MCF 10A (cell line): ENCODE measurements at regions of chr10 and their contacts with region 1.

Region 1: DNA sequence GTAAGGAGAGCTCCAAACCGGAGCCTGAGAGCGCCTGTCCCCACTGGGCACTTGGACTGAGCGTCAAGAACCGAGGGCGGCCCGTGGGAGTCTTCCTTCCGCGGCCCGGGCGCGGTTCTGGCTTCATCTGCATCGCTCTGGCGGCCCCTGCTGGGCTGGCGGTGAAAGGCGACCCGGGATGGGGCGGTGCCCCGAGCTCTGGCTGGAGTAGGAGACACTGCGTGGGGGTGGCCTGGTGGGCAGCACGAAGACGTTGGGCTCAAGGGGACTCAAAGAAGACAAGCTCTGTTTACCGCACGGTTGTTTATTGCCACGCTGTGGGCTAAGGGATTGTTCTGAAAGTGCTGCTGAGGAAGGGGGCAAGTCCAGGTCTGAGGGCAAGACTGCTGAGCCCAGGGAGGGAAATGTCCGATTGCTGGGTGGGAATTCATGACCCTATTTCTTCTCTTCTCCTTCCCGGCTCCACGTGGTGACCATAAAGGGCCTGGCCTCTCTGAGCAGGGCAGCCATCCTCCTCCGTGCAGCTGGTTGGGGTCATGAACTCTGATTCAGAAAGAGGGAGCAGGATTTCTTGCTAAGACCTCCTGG is 29.8 kb downstream of the PLAU start:
- DNase-seq: peak; percentile 74
- H3K4me3 Mint-ChIP-seq: no peak overlapping the region
- H3K27ac Mint-ChIP-seq: peak overlapping the region; percentile 72
- H3K4me1 Mint-ChIP-seq: peaks cover 31% of the 10 kb centered on the region
- H3K27me3 Mint-ChIP-seq: no peaks in the 10 kb centered on the region
- CTCF ChIP-seq: peak; percentile 95

Region 2: DNA sequence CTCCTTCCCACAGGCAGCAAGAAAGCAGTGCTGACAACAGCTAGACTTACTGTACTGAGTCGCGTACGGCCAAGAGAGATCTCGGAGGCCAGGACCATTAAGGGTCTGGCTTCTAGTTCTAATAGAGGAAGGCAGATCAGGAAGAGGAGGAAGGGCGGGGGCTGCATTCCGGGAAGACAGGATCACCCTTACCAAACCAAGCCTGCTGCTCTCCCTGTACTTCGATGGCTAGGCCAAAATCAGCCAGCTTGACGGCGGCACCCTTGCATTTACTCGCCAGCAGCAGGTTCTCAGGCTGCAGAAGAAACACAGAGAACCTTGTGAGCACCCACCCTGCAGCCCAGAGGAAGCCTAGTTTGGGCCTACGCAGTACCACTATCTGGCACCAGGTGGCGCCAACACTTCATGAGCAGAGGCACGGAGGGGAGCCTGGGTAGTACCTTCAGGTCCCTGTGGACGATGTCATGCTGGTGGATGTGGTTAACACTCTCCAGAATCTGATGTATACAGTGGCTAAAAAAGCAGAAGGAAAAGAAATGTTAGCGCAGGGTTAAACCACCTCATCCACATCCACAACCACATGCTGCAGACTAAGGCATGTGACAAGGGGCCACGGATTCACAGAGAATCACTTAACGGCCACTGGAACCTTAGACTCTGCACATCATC is 91.8 kb before region 1 on chr10:
- CTCF ChIA-PET with region 1: interaction called, 63 read pairs
- POLR2A ChIA-PET with region 1: interaction called, 11 read pairs
- intact Hi-C with region 1: loop called (anchors 1 kb)
- DNase-seq: peak; percentile 79
- H3K4me3 Mint-ChIP-seq: no peak overlapping the region
- H3K27ac Mint-ChIP-seq: no peak overlapping the region
- H3K4me1 Mint-ChIP-seq: no peaks in the 10 kb centered on the region
- H3K27me3 Mint-ChIP-seq: no peaks in the 10 kb centered on the region
- CTCF ChIP-seq: peak; percentile 98

Region 3: GRCh38 chr10:73920089-73920488 is 20.6 kb before region 1 on chr10:
- CTCF ChIA-PET with region 1: interaction called, 30 read pairs
- POLR2A ChIA-PET with region 1: interaction called, 16 read pairs
- intact Hi-C with region 1: no loop called
- DNase-seq: peak; percentile 91
- H3K4me3 Mint-ChIP-seq: no peak overlapping the region
- H3K27ac Mint-ChIP-seq: peak overlapping the region; percentile 95
- H3K4me1 Mint-ChIP-seq: peaks cover 29% of the 10 kb centered on the region
- H3K27me3 Mint-ChIP-seq: no peaks in the 10 kb centered on the region
- CTCF ChIP-seq: no peak

Region 4: GRCh38 chr10:73956476-73957359 is 16.0 kb after region 1 on chr10:
- CTCF ChIA-PET with region 1: interaction called, 29 read pairs
- POLR2A ChIA-PET with region 1: interaction called, 3 read pairs
- intact Hi-C with region 1: no loop called
- DNase-seq: no peak
- H3K4me3 Mint-ChIP-seq: no peak overlapping the region
- H3K27ac Mint-ChIP-seq: no peak overlapping the region
- H3K4me1 Mint-ChIP-seq: peaks cover 4% of the 10 kb centered on the region
- H3K27me3 Mint-ChIP-seq: no peaks in the 10 kb centered on the region
- CTCF ChIP-seq: no peak

Region 5: DNA sequence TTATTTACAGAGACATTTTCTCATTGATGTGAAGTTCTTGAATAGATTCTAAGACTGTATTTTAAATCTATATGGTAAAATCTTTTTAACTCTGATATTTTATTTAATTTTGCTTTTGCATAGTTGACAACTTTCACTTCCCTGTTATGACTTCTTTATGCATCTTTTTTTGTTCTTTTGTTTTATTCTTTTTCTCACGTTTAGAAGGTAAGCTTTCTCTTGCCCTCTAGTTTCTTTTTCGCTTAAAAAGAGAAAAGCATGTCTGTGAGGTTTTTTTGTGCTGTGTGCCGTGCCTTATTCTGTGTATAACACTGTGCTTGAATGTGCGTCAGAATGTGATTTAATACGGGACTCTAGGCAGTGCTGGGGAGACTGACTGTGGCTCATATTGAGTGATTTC is 135.2 kb after region 1 on chr10:
- CTCF ChIA-PET with region 1: interaction called, 16 read pairs
- POLR2A ChIA-PET with region 1: interaction called, 12 read pairs
- intact Hi-C with region 1: loop called (anchors 2 kb)
- DNase-seq: no peak
- H3K4me3 Mint-ChIP-seq: no peak overlapping the region
- H3K27ac Mint-ChIP-seq: no peak overlapping the region
- H3K4me1 Mint-ChIP-seq: peaks cover 16% of the 10 kb centered on the region
- H3K27me3 Mint-ChIP-seq: no peaks in the 10 kb centered on the region
- CTCF ChIP-seq: no peak

Region 6: DNA sequence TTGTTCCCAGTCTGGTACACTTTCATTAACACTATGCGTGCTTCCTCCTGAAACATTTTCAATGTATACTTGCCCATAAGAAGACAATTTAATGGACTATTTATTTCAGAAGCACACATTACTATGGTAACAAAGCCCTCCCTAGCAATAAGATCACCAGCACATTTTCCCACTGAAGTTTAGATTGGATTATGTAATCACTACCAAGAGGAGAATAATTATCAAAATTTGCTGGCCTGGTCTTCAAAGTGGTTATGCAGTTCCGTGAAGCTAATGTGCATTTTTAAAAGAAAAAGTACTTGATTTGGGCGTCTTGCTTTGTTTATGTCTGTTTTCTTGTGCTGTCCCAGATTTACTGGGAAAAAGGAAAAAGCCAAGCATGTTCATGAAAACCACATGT is 148.0 kb after region 1 on chr10:
- CTCF ChIA-PET with region 1: no interaction called
- POLR2A ChIA-PET with region 1: no interaction called
- intact Hi-C with region 1: no loop called
- DNase-seq: no peak
- H3K4me3 Mint-ChIP-seq: no peak overlapping the region
- H3K27ac Mint-ChIP-seq: no peak overlapping the region
- H3K4me1 Mint-ChIP-seq: no peaks in the 10 kb centered on the region
- H3K27me3 Mint-ChIP-seq: no peaks in the 10 kb centered on the region
- CTCF ChIP-seq: no peak